Left cardiac atrium (tissue), 4 donors: ENCODE measurements at regions of chr5 and their contacts with region 1.

Region 1: DNA sequence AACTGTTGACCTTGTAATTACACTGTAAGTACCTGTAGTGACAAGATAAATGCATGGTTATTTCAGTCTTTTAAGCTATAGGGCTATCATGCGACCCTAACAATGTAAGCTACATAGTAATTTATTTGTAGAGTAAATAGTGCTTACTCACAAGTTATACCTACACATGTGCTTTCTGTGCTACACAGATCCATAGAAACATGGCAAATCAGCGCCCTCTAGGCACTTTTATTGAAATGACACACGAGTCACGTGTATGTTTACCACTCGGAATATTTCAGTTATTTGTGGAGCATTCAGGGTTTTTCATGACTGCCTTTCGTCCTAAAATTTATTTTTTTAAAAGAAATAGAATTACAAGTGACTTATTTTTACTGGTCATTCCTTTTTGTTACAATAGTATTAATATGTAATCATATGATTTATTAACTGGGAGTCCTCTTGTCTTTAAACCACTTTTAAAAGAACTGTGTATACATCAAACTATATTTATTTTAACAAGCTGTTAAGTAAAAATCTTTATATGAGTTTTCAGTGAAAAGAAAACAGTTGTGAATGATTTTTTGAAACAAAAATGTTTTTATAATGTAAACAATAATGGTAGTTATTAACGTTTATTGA is 1242.3 kb upstream of the WWC1 start:
- DNase-seq: no peak
- ATAC-seq: peak; percentile 41 to 45

Region 2: GRCh38 chr5:165630261-165630778 is 1418.8 kb before region 1 on chr5:
- intact Hi-C with region 1: loop called in 1 of 2 experiments (anchors 10 kb)
- DNase-seq: peak; percentile 22
- ATAC-seq: peak; percentile 74 to 93

Region 3: GRCh38 chr5:167030500-167031120 is 18.5 kb before region 1 on chr5:
- intact Hi-C with region 1: no loop called
- DNase-seq: no peak
- ATAC-seq: no peak